MCF 10A (cell line): ENCODE measurements at regions of chr20 and their contacts with region 1.

Region 1: GRCh38 chr20:56468316-56469082 is at the start of gene RTF2:
- DNase-seq: peak; percentile 91
- H3K4me3 Mint-ChIP-seq: peak within 1 kb of the TSS; percentile 99
- H3K27ac Mint-ChIP-seq: peak within 1 kb of the TSS; percentile 100
- H3K4me1 Mint-ChIP-seq: peaks cover 10% of the 10 kb centered on the region
- H3K27me3 Mint-ChIP-seq: peaks cover 11% of the 10 kb centered on the region
- CTCF ChIP-seq: no peak
- total RNA-seq, gene RTF2: 66.4 and 72.8 TPM in 2 replicates

Region 2: GRCh38 chr20:56483944-56484343 is 15.4 kb after region 1 on chr20:
- CTCF ChIA-PET with region 1: interaction called, 4 read pairs
- POLR2A ChIA-PET with region 1: interaction called, 10 read pairs
- intact Hi-C with region 1: no loop called
- DNase-seq: no peak
- H3K4me3 Mint-ChIP-seq: no peak overlapping the region
- H3K27ac Mint-ChIP-seq: no peak overlapping the region
- H3K4me1 Mint-ChIP-seq: no peaks in the 10 kb centered on the region
- H3K27me3 Mint-ChIP-seq: no peaks in the 10 kb centered on the region
- CTCF ChIP-seq: no peak

Region 3: DNA sequence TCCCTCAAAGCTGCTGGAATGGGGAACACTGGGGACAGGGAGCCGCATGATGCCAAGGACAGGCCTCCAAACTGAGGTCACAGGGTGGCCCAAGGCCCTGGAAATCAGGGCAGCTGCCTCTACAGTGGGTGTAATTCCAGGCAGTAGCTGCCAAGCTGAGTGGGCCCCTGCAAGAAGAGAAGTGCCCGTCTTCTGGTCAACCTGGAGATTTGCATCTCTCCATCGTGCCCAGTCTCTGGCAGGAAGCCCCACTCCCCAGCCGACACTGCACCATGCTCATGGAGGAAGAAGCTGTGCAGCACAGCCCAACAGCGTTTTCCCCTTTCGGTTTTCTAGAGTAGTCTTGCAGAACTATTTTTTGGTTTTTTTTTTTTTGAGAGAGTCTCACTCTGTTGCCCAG is 53.8 kb after region 1 on chr20:
- CTCF ChIA-PET with region 1: no interaction called
- POLR2A ChIA-PET with region 1: no interaction called
- intact Hi-C with region 1: no loop called
- DNase-seq: no peak
- H3K4me3 Mint-ChIP-seq: no peak overlapping the region
- H3K27ac Mint-ChIP-seq: no peak overlapping the region
- H3K4me1 Mint-ChIP-seq: no peaks in the 10 kb centered on the region
- H3K27me3 Mint-ChIP-seq: peaks cover 22% of the 10 kb centered on the region
- CTCF ChIP-seq: no peak